Ascending aorta (tissue), 2 donors: ENCODE measurements at regions of chr2 and their contacts with region 1.

Region 1: DNA sequence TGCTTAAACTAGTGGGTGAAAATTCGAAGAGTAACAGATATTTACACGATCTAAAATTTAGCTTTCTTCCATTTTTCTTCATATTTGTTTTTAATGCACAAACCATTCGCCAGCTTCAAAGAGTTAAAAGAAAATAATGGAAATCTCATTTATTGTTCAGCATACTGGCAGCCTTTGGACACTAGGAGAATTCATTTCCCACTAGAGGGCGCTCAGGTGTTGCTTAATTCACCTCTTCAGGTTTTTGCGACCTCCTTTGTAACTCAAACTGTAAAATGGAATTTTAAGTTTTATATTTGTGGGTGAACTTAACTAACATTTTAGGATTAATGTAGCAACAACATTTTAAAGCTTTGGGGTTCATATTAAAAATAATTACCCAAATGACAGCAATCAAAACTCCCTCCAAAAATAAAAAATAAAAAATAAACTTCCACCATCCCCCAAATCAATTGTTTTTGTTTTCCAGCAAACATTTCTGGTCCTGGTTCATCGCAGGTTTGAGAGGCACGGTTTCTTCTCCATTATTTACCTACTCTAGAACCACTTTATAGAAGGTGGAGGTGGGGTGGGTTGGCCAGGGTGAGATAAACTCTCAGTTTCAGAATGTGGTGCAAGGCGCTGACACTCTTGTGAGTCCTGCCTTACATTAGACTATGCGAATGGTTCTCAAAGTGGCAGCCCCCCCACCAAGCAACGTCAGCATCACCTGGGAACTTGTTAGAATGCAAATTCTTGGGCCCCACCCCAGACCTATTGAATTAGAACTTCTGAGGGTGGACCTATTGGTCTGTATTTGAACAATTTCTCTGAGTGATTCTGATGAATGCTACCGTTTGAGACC is 24.7 kb upstream of the PNPT1 start:
- DNase-seq: peak in 1 of 2 donors; percentile 71
- H3K4me3 ChIP-seq: no peak overlapping the region
- H3K27ac ChIP-seq: no peak overlapping the region
- H3K4me1 ChIP-seq: no peaks in the 10 kb centered on the region
- H3K27me3 ChIP-seq: no peaks in the 10 kb centered on the region
- CTCF ChIP-seq: peak; percentile 56 to 81 (median 80)

Region 2: DNA sequence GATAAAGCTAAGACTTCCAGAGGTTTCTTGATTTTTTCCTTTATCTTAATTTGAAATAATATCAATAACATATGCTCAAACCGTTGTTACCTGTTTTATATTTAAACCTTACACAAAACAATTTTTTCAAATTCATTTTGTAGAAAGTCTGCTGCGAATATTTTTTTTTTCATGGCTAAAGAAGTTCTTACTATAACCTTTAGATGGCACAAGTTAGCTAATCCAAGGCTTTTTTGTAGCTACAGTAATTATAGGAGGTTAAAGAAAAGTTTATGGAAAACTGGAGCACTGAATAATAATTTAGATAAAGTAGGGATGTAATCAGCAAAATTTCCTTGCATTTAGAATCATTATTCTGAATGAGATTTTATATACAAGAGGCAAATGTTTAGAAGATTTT is 53.2 kb after region 1 on chr2:
- intact Hi-C with region 1: loop called (anchors 2 kb)
- DNase-seq: no peak
- H3K4me3 ChIP-seq: no peak overlapping the region
- H3K27ac ChIP-seq: no peak overlapping the region
- H3K4me1 ChIP-seq: peaks cover 0 to 3% of the 10 kb centered on the region in 2 donors
- H3K27me3 ChIP-seq: no peaks in the 10 kb centered on the region
- CTCF ChIP-seq: peak; percentile 45 to 87 (median 77)

Region 3: DNA sequence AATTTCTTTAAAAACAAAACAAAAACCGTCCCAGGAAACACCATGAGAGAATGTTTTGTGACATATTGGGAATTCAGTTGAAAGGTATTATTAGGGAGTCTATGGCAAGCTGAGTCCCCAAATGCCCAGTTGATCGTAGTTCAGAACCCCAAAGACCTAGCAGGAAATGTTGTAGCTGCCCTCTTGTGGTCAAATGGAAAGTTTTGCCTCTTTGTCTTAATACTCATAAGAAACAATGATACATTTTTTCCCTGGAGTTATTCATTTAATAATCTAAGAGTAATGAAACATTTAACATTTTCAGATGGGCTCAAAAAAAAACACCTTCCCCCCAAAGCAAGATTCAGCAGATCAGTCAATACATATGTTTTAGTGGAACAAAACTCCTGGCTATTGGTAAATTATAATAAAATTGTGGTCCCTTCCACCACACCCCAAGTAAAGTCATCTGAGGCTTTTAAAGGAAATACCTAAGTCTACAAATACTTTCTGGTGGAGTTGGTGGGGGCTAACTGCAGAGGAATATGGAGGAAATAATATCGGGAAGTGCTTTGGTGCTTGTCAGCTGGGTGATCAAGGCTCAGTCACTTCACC is 243.0 kb after region 1 on chr2:
- intact Hi-C with region 1: loop called (anchors 1 kb)
- DNase-seq: no peak
- H3K4me3 ChIP-seq: no peak overlapping the region
- H3K27ac ChIP-seq: no peak overlapping the region
- H3K4me1 ChIP-seq: peaks cover 7 to 8% of the 10 kb centered on the region in 2 donors
- H3K27me3 ChIP-seq: no peaks in the 10 kb centered on the region
- CTCF ChIP-seq: peak; percentile 37 to 72 (median 61)

Region 4: DNA sequence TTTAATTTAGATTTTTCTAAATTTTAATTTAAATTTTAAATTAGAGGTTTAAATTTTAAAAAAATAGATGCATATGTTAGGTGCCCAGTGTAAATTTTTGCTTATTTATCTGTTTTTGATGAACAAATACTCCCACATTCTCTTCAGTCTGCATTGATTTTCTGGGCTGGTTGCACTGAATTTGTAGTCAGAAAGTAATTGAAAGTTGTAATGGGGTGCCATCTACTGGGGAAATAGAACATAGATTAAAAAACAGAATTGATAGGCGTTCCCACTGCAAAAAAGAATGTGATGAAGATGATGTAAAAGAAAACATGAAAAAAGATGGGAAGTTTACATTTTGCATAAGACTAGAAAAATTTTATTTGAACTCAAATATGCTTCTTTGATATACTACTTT is 413.8 kb after region 1 on chr2:
- intact Hi-C with region 1: loop called (anchors 2 kb)
- DNase-seq: no peak
- H3K4me3 ChIP-seq: no peak overlapping the region
- H3K27ac ChIP-seq: no peak overlapping the region
- H3K4me1 ChIP-seq: no peaks in the 10 kb centered on the region
- H3K27me3 ChIP-seq: no peaks in the 10 kb centered on the region
- CTCF ChIP-seq: peak in 2 of 3 experiments; percentile 49 to 55